A673 (cell line): ENCODE measurements at regions of chr12 and their contacts with region 1.

Region 1: GRCh38 chr12:55829967-55830600 is 697 bp upstream of the DNAJC14 start:
- DNase-seq: no peak
- H3K4me3 ChIP-seq: peak overlapping the region; percentile 99
- H3K27ac ChIP-seq: peak overlapping the region; percentile 95
- H3K4me1 ChIP-seq: peaks cover 2% of the 10 kb centered on the region
- H3K27me3 ChIP-seq: no peaks in the 10 kb centered on the region
- CTCF ChIP-seq: no peak

Region 2: DNA sequence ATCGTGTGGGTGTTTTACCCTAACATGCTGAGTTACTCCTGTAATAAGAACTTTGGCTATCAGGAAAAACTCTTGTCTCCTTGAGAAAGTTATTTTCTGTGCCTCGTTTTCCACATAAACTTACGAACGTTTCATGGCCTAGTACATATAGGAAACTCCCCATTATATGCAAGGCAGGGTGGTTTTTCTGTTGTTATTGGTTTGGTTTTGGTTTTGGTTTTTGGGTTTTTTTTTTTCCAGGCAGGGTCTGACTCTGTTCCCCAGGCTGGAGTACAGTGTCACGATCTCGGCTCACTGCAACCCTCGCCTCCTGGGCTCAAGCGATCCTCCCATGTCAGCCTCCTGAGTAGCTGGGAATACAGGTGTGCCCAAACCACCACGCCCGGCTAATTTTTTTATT is 494.1 kb before region 1 on chr12:
- CTCF ChIA-PET with region 1: no interaction called
- POLR2A ChIA-PET with region 1: no interaction called
- intact Hi-C with region 1: no loop called
- DNase-seq: no peak
- H3K4me3 ChIP-seq: no peak overlapping the region
- H3K27ac ChIP-seq: no peak overlapping the region
- H3K4me1 ChIP-seq: no peaks in the 10 kb centered on the region
- H3K27me3 ChIP-seq: peaks cover 62% of the 10 kb centered on the region
- CTCF ChIP-seq: no peak

Region 3: DNA sequence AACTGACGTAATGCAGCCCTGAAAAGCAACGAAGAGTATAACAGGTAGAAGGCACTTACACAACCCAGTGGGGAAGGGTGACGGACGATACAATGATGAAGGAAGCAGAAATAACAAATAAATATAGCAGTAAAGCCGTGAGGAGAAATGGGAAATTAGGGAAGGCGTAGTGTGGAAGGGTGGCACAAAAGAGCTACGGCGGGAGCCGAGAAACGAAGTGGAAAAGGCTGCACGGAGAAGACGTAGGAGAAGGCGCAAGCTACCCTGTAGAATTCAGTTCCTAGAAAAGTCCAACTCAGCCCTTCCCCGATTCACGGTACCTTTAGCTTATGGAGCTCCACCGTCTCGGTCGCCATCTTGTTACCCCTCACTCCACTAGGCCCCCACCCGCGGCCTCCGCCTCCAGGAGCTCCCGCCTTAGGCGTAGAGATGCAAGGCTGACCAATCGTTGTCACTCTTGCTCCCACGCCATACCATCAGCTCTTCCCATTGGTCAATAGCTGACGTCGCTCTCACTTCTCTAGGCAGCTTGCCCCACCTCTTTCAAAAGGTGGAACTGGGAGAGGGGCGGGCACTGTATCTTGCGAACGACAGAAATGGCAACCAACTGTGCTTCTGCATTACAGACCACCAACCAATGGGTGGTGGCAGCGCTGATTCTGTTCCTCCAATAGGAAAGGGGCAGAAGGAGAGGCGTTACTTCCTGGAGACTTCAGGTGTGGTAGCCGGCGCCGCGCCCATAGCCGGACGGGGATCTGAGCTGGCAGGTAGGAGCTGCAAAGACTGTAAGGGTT is 12.5 kb before region 1 on chr12 and contains the starts of genes ORMDL2 and SARNP:
- CTCF ChIA-PET with region 1: no interaction called
- POLR2A ChIA-PET with region 1: interaction called, 15 read pairs
- intact Hi-C with region 1: no loop called
- DNase-seq: peak; percentile 100
- H3K4me3 ChIP-seq: peak within 1 kb of the TSS; percentile 71
- H3K27ac ChIP-seq: peak within 1 kb of the TSS; percentile 75
- H3K4me1 ChIP-seq: peaks cover 17% of the 10 kb centered on the region
- H3K27me3 ChIP-seq: no peaks in the 10 kb centered on the region
- CTCF ChIP-seq: no peak
- total RNA-seq, gene ORMDL2: 32.3 and 35.4 TPM in 2 replicates
- total RNA-seq, gene SARNP: 104 and 115 TPM in 2 replicates

Region 4: DNA sequence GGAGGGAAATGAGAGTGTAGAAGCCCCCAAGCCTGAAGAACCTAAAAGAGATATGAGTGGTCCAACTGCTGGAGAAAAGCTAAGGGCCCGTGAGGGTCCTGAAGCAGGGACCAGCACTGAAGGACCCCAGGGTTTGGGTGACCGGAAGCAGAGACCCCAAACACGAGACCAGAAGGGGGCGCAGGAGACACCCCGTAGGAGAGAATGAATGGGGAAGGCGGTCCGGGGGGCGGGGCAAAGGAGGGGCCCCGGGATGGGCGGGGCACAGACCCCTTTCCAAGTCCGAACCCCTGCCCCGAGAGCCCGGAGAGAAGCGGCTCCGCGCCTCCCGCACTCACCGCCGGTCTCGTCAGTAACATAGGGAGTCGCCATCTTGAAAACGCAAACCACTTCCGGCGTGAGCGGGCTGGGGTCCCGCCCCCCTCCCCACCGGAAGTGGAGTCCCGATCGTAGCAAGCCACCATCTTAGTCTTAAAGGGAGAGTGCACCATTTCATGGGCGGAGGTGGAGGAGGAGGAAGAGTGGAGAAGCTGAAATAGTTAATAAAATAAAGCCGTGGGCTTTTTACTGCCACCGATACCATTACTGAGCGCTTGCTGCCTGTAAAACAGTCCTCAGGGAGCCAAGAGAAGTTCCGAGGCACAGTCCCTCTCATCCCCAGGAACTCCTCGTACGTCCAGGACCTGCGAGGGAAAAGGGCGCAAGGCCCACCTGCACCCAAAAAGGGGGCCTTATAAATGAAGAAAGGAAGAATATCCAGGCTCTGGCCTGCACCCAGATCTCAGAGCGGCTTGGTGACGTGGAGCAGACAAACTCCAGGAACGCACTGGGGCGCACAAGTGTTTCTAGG is 96.9 kb after region 1 on chr12:
- CTCF ChIA-PET with region 1: interaction called, 4 read pairs
- POLR2A ChIA-PET with region 1: no interaction called
- intact Hi-C with region 1: loop called (anchors 2 kb)
- DNase-seq: peak; percentile 97
- H3K4me3 ChIP-seq: peak overlapping the region; percentile 91
- H3K27ac ChIP-seq: peak overlapping the region; percentile 95
- H3K4me1 ChIP-seq: peaks cover 32% of the 10 kb centered on the region
- H3K27me3 ChIP-seq: no peaks in the 10 kb centered on the region
- CTCF ChIP-seq: peak; percentile 96

Region 5: DNA sequence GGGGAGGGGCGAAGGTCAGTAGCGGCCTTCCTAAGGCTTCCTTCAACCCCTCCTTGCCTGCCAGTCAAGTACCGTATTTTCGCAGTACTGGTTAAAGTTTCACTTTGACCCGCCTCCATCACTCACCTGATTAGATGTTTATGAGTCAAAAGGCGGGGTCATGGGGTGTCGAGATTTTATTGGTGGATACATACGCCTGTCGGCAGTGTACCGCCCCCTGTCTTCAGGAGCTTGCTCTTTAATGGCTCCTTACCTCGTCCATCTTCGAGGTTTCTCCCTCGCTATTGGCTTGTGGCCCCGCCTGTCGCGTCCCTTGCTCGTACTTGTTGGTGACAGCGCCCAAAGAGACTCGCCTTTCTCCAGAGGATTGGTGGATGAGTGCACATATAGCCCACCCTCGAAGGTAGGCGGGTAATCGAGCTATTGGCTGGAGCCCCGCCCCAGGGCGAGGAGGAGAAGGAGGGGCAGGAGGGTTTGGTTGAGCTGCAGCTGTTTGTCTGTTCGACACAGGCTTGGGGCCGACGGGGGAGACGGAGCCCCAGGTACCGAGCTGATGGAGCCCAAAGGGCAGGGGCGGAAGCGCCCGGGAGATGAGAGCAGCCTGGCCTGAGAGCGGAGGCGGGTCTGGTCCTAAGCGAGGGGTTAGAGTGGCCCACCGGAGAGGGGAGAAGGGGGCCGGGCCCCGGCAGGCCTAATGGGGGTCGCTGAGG is 143.7 kb after region 1 on chr12 and contains the start of gene RAB5B:
- CTCF ChIA-PET with region 1: interaction called, 7 read pairs
- POLR2A ChIA-PET with region 1: interaction called, 28 read pairs
- intact Hi-C with region 1: no loop called
- DNase-seq: peak; percentile 100
- H3K4me3 ChIP-seq: peak within 1 kb of the TSS; percentile 92
- H3K27ac ChIP-seq: peak within 1 kb of the TSS; percentile 81
- H3K4me1 ChIP-seq: peaks cover 8% of the 10 kb centered on the region
- H3K27me3 ChIP-seq: no peaks in the 10 kb centered on the region
- CTCF ChIP-seq: no peak
- total RNA-seq, gene RAB5B: 73.9 and 78.1 TPM in 2 replicates

Region 6: DNA sequence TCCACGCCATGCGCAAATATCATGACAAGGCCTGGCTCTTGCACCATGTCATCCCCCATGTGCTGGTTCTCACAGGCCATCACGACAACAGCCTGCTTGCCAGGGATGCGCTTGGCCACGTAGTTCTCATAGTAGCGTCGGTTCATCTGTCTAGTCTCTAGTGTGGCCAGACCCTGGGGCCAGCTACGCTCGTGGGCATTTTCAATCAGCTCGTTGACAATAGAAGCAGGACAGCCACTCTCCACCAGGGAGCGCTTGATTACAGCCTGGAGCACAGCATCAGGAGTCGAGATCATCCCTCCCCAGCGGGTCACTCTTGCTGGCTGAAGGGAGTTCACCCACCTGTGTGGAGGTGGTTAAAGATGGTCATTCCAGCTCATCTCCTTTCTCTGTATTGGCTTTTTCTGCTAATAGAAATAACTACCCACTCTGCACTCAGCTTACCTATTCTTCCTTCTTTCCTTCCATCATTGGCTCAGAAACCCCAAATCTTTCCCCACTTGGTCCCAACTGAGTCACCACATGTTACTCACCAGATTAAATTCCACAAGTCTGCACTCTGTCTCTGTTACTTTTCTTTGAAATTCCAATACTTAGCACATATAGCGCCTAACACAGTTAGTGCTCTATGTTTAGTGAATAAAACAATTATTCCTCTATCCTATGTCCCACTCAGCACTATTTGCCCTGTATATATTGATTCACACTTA is 376.5 kb after region 1 on chr12:
- CTCF ChIA-PET with region 1: no interaction called
- POLR2A ChIA-PET with region 1: no interaction called
- intact Hi-C with region 1: no loop called
- DNase-seq: peak; percentile 56
- H3K4me3 ChIP-seq: no peak overlapping the region
- H3K27ac ChIP-seq: no peak overlapping the region
- H3K4me1 ChIP-seq: peaks cover 5% of the 10 kb centered on the region
- H3K27me3 ChIP-seq: no peaks in the 10 kb centered on the region
- CTCF ChIP-seq: peak; percentile 72